GM12878 (cell line): ENCODE measurements at regions of chr21 and their contacts with region 1.

Region 1: GRCh38 chr21:29018540-29018939 is 609 bp downstream of the RWDD2B start:
- DNase-seq: no peak
- ATAC-seq: peak; percentile 42
- H3K4me3 ChIP-seq: peak overlapping the region; percentile 97
- H3K27ac ChIP-seq: peak overlapping the region; percentile 95
- H3K4me1 ChIP-seq: peaks cover 9% of the 10 kb centered on the region; the same call in 1 of the 2 replicates
- H3K27me3 ChIP-seq: no peaks in the 10 kb centered on the region
- CTCF ChIP-seq: no peak
- EP300 ChIP-seq: no peak
- POLR2A ChIP-seq: no peak
- RAD21 ChIP-seq: no peak

Region 2: DNA sequence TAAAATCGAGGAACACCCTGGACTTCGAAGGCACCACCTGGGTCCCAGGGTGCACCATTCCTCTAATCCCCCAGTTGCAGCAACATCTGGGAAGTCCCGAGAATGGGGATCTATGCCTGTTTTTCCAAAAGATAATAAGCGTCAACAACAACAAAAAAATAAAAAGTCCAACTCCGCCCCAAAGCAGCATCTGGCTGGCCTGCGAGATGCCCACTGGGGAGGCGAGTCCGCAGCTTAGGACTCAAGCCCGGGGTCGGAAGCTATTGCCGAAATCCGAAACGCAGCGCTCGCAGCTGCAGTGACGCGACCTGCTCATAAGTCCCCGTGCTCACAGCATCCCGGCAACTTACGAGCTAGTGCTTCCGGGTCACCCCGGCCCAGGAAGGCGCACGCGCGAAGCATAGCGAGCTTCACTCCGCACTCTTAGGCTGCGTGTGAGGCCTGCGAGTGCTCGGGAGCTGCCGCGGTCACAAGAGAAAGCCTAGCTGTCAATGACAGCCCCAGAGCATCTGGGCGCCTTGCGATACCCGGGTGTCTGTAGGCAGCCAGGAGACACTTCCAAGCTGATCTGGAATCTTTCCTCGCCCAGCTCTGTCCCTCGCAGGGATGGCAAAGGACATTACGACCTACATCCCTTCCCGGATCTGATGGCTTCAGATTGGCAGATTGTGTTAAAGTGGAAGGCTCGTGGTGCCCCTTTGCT is 15.9 kb before region 1 on chr21:
- CTCF ChIA-PET with region 1: interaction called, 5 read pairs
- POLR2A ChIA-PET with region 1: interaction called, 41 read pairs
- RAD21 ChIA-PET with region 1: interaction called, 24 read pairs
- SMC1A ChIA-PET with region 1: interaction called, 20 read pairs
- in situ Hi-C with region 1: no loop called
- intact Hi-C with region 1: no loop called
- DNase-seq: peak; percentile 89
- ATAC-seq: peak; percentile 100
- H3K4me3 ChIP-seq: peak overlapping the region; percentile 75
- H3K27ac ChIP-seq: peak overlapping the region; percentile 96
- H3K4me1 ChIP-seq: peaks cover 3% of the 10 kb centered on the region
- H3K27me3 ChIP-seq: no peaks in the 10 kb centered on the region
- CTCF ChIP-seq: no peak
- EP300 ChIP-seq: no peak
- POLR2A ChIP-seq: peak; percentile 99
- RAD21 ChIP-seq: no peak

Region 3: GRCh38 chr21:29007805-29008204 is 10.7 kb before region 1 on chr21:
- CTCF ChIA-PET with region 1: interaction called, 5 read pairs
- POLR2A ChIA-PET with region 1: interaction called, 41 read pairs
- RAD21 ChIA-PET with region 1: interaction called, 24 read pairs
- SMC1A ChIA-PET with region 1: interaction called, 20 read pairs
- in situ Hi-C with region 1: no loop called
- intact Hi-C with region 1: no loop called
- DNase-seq: no peak
- ATAC-seq: no peak
- H3K4me3 ChIP-seq: no peak overlapping the region
- H3K27ac ChIP-seq: no peak overlapping the region
- H3K4me1 ChIP-seq: no peaks in the 10 kb centered on the region
- H3K27me3 ChIP-seq: no peaks in the 10 kb centered on the region
- CTCF ChIP-seq: no peak
- EP300 ChIP-seq: no peak
- POLR2A ChIP-seq: no peak
- RAD21 ChIP-seq: no peak

Region 4: DNA sequence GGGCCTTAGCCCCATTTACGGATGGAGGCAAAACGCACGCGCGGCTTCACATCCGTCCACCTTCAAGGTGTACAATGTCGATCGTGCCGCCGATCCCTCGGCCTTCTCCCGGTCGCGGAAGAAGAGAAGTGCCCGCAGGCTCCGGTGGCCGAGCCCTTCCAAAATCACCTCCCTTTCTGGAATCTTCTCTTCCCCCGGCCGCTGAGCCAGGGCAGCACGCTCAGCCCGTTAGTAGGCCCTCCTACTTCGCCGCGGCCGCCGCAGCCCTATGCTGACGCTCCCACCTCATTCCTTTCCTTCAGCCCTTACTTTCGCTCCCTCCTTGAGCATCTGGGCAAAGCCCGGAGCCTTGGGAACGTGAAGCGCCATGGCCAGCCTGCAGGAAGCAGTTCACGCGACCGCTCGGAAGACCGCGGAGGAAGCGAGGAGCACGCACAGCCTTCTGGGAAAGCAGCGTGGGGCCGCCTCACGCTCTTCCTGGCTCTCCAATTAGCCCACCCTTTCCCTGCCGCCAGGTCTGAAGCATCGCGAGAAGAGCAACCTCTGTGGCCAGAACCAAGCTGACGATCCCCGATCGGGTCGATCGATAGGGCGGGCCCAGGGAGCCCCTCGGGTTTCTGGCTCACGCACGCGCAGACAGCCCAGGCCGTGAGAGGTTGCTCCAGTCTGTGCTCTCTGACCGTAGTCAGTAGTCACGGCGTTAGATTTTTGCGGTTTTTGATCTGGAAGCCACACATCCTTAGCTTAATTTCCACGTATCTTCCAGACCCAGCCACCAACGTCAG is 54.9 kb after region 1 on chr21 and contains the start of gene CCT8:
- CTCF ChIA-PET with region 1: interaction called, 3 read pairs
- POLR2A ChIA-PET with region 1: interaction called, 20 read pairs
- RAD21 ChIA-PET with region 1: interaction called, 10 read pairs
- SMC1A ChIA-PET with region 1: interaction called, 16 read pairs
- in situ Hi-C with region 1: no loop called
- intact Hi-C with region 1: loop called (anchors 5 kb)
- DNase-seq: peak; percentile 98
- ATAC-seq: peak; percentile 87
- H3K4me3 ChIP-seq: peak within 1 kb of the TSS; percentile 91
- H3K27ac ChIP-seq: peak within 1 kb of the TSS; percentile 98
- H3K4me1 ChIP-seq: no peaks in the 10 kb centered on the region
- H3K27me3 ChIP-seq: no peaks in the 10 kb centered on the region
- CTCF ChIP-seq: no peak
- EP300 ChIP-seq: peak in 1 of 2 experiments; percentile 49; a peak in 1 of 4 replicates
- POLR2A ChIP-seq: peak; percentile 100
- RAD21 ChIP-seq: no peak
- polyA plus RNA-seq, gene CCT8: 510 to 696 TPM

Region 5: GRCh38 chr21:29293495-29293894 is 275.0 kb after region 1 on chr21:
- CTCF ChIA-PET with region 1: no interaction called
- POLR2A ChIA-PET with region 1: no interaction called
- RAD21 ChIA-PET with region 1: no interaction called
- SMC1A ChIA-PET with region 1: no interaction called
- in situ Hi-C with region 1: no loop called
- intact Hi-C with region 1: no loop called
- DNase-seq: peak; percentile 71
- ATAC-seq: peak; percentile 95
- H3K4me3 ChIP-seq: no peak overlapping the region
- H3K27ac ChIP-seq: no peak overlapping the region
- H3K4me1 ChIP-seq: peaks cover 26% of the 10 kb centered on the region
- H3K27me3 ChIP-seq: no peaks in the 10 kb centered on the region
- CTCF ChIP-seq: no peak
- EP300 ChIP-seq: no peak
- POLR2A ChIP-seq: no peak
- RAD21 ChIP-seq: 0 out of 2 replicates have a peak, but pooled peaks have one; percentile 4